Mammary epithelial cell (primary cell): ENCODE measurements at regions of chr12 and their contacts with region 1.

Region 1: GRCh38 chr12:10661338-10661737 is 12.5 kb downstream of the STYK1 start:
- DNase-seq: peak; percentile 22
- H3K4me3 ChIP-seq: no peak overlapping the region
- H3K27ac ChIP-seq: no peak overlapping the region
- H3K4me1 ChIP-seq: no peaks in the 10 kb centered on the region
- H3K27me3 ChIP-seq: no peaks in the 10 kb centered on the region
- CTCF ChIP-seq: no peak

Region 2: GRCh38 chr12:10584415-10584814 is 76.9 kb before region 1 on chr12:
- CTCF ChIA-PET with region 1: no interaction called
- dilution Hi-C with region 1: no loop called
- in situ Hi-C with region 1: no loop called
- intact Hi-C with region 1: no loop called
- DNase-seq: no peak
- H3K4me3 ChIP-seq: no peak overlapping the region
- H3K27ac ChIP-seq: no peak overlapping the region
- H3K4me1 ChIP-seq: no peaks in the 10 kb centered on the region
- H3K27me3 ChIP-seq: no peaks in the 10 kb centered on the region
- CTCF ChIP-seq: no peak

Region 3: GRCh38 chr12:10641735-10642500 is 19.4 kb before region 1 on chr12:
- CTCF ChIA-PET with region 1: interaction called, 3 read pairs
- dilution Hi-C with region 1: no loop called
- in situ Hi-C with region 1: no loop called
- intact Hi-C with region 1: loop called (anchors 2 kb)
- DNase-seq: peak; percentile 28
- H3K4me3 ChIP-seq: no peak overlapping the region
- H3K27ac ChIP-seq: no peak overlapping the region
- H3K4me1 ChIP-seq: peaks cover 8% of the 10 kb centered on the region
- H3K27me3 ChIP-seq: no peaks in the 10 kb centered on the region
- CTCF ChIP-seq: no peak

Region 4: GRCh38 chr12:10673660-10674384 is 12.5 kb after region 1 on chr12 and contains the start of gene STYK1:
- CTCF ChIA-PET with region 1: no interaction called
- dilution Hi-C with region 1: no loop called
- in situ Hi-C with region 1: no loop called
- intact Hi-C with region 1: no loop called
- DNase-seq: peak; percentile 87
- H3K4me3 ChIP-seq: peak within 1 kb of the TSS; percentile 70 to 82 (median 76)
- H3K27ac ChIP-seq: peak within 1 kb of the TSS; percentile 64
- H3K4me1 ChIP-seq: peaks cover 4% of the 10 kb centered on the region
- H3K27me3 ChIP-seq: no peaks in the 10 kb centered on the region
- CTCF ChIP-seq: peak; percentile 93 to 98
- total RNA-seq, gene STYK1: 4.8 to 4.9 TPM